H1 (cell line): ENCODE measurements at regions of chr17 and their contacts with region 1.

Region 1: DNA sequence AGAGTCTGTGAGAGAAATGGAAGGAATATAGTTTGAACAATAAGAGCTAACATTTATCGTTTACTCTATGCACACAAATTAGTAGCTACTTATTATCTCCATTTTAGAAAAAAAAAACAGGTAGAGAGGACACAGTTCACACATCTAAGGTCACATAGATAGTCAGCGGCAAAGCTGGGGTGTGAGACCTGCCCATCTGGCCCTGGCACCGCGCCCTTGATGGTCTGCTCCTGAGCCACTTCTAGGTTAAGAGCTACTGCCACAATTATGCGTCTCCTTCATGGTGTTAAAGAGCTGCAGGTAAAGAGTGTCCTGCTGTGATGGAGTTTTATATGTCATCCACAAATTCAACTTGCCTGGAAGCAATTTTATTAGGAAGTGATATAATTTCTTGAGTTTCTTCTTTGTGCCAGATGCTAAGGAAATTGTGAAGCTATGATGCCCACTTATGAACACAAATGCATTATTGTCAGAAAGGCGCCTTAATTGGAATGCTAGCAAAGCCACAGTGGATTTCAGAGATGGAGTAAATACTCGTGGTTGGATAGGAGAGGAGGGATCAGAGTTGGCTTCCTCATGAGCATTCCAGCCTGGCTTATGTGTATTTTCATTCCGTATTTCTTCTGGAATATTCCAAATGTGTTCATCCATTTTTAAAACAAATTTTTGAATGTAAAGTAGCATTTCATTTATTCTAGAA is 21.3 kb upstream of the MFSD6L start:
- DNase-seq: peak in 1 of 2 experiments; percentile 29
- H3K4me3 ChIP-seq: no peak overlapping the region
- H3K27ac ChIP-seq: no peak overlapping the region
- H3K4me1 ChIP-seq: no peaks in the 10 kb centered on the region; a peak in 1 of 7 replicates
- H3K27me3 ChIP-seq: no peaks in the 10 kb centered on the region
- CTCF ChIP-seq: no peak
- EP300 ChIP-seq: no peak
- POLR2A ChIP-seq: no peak
- RAD21 ChIP-seq: no peak

Region 2: GRCh38 chr17:8776881-8777280 is 43.6 kb before region 1 on chr17:
- CTCF ChIA-PET with region 1: no interaction called
- POLR2A ChIA-PET with region 1: no interaction called
- DNase-seq: no peak
- H3K4me3 ChIP-seq: no peak overlapping the region
- H3K27ac ChIP-seq: no peak overlapping the region
- H3K4me1 ChIP-seq: no peaks in the 10 kb centered on the region
- H3K27me3 ChIP-seq: no peaks in the 10 kb centered on the region
- CTCF ChIP-seq: no peak
- EP300 ChIP-seq: no peak
- POLR2A ChIP-seq: no peak
- RAD21 ChIP-seq: no peak

Region 3: DNA sequence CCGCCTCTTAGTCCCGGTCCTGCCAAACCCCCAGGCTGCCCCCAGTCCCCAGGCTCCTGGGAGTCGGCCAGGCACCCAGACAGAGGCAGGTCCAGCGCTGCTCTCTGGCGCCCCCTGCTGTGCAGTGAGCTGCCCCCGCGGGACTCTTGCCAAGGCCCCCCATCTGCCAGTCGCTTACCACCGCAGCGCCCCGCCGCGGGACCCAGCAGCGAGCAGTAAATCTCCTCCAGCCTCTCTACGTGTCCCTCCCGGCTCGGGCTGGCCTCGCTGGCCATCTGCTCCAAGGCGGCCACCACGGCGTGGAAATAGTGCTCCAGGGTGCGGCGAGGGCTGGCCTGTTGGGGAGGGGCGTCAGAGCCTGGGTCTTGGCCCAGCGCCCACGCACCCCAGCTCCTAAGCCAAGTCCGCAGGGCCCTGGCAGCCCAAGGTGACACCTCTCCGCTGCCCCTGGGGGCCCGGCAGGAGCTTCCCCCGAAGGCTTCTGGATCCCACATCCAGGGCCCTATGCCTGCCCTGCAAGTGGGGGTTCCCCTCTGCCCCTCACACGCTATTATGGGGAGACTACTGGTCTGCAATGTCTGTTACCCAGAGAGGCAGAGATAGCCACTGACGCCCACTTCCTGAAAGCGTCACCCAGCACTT is 12.4 kb after region 1 on chr17:
- CTCF ChIA-PET with region 1: interaction called, 17 read pairs
- POLR2A ChIA-PET with region 1: interaction called, 4 read pairs
- DNase-seq: peak; percentile 59 to 95
- H3K4me3 ChIP-seq: no peak overlapping the region
- H3K27ac ChIP-seq: no peak overlapping the region
- H3K4me1 ChIP-seq: peaks cover 0 to 5% (median 4%) of the 10 kb centered on the region in 4 experiments
- H3K27me3 ChIP-seq: no peaks in the 10 kb centered on the region
- CTCF ChIP-seq: peak; percentile 68 to 83 (median 69)
- EP300 ChIP-seq: no peak
- POLR2A ChIP-seq: no peak
- RAD21 ChIP-seq: peak; percentile 48 to 71